ENCODE measurements at regions of chr1 and their contacts with region 1.

Region 1: GRCh38 chr1:35930593-35931445 is at the start of gene AGO3:
- DNase-seq: peak; percentile 73 to 96 (median 80)
- ATAC-seq: peak; percentile 79
- H3K4me3 ChIP-seq: peak within 1 kb of the TSS; percentile 78
- H3K4me3 Mint-ChIP-seq: peak within 1 kb of the TSS; percentile 94
- H3K27ac ChIP-seq: peak within 1 kb of the TSS; percentile 91 to 97
- H3K27ac Mint-ChIP-seq: peak within 1 kb of the TSS; percentile 96
- H3K4me1 ChIP-seq: peaks cover 19% of the 10 kb centered on the region
- H3K4me1 Mint-ChIP-seq: peaks cover 44% of the 10 kb centered on the region
- H3K27me3 ChIP-seq: no peaks in the 10 kb centered on the region
- H3K27me3 Mint-ChIP-seq: no peaks in the 10 kb centered on the region
- CTCF ChIP-seq: no peak
- total RNA-seq, gene AGO3: 31.3 to 34.5 TPM

Region 2: GRCh38 chr1:35825255-35825654 is 105.6 kb before region 1 on chr1:
- CTCF ChIA-PET with region 1: no interaction called
- POLR2A ChIA-PET with region 1: no interaction called
- intact Hi-C with region 1: no loop called
- DNase-seq: no peak
- ATAC-seq: no peak
- H3K4me3 ChIP-seq: no peak overlapping the region
- H3K4me3 Mint-ChIP-seq: no peak overlapping the region
- H3K27ac ChIP-seq: no peak overlapping the region
- H3K27ac Mint-ChIP-seq: no peak overlapping the region
- H3K4me1 ChIP-seq: no peaks in the 10 kb centered on the region
- H3K4me1 Mint-ChIP-seq: no peaks in the 10 kb centered on the region
- H3K27me3 ChIP-seq: no peaks in the 10 kb centered on the region
- H3K27me3 Mint-ChIP-seq: no peaks in the 10 kb centered on the region
- CTCF ChIP-seq: no peak

Region 3: GRCh38 chr1:35851132-35851869 is 79.5 kb before region 1 on chr1:
- CTCF ChIA-PET with region 1: no interaction called
- POLR2A ChIA-PET with region 1: no interaction called
- intact Hi-C with region 1: no loop called
- DNase-seq: no peak
- ATAC-seq: no peak
- H3K4me3 ChIP-seq: no peak overlapping the region
- H3K4me3 Mint-ChIP-seq: no peak overlapping the region
- H3K27ac ChIP-seq: no peak overlapping the region
- H3K27ac Mint-ChIP-seq: no peak overlapping the region
- H3K4me1 ChIP-seq: no peaks in the 10 kb centered on the region
- H3K4me1 Mint-ChIP-seq: no peaks in the 10 kb centered on the region
- H3K27me3 ChIP-seq: no peaks in the 10 kb centered on the region
- H3K27me3 Mint-ChIP-seq: no peaks in the 10 kb centered on the region
- CTCF ChIP-seq: no peak

Region 4: DNA sequence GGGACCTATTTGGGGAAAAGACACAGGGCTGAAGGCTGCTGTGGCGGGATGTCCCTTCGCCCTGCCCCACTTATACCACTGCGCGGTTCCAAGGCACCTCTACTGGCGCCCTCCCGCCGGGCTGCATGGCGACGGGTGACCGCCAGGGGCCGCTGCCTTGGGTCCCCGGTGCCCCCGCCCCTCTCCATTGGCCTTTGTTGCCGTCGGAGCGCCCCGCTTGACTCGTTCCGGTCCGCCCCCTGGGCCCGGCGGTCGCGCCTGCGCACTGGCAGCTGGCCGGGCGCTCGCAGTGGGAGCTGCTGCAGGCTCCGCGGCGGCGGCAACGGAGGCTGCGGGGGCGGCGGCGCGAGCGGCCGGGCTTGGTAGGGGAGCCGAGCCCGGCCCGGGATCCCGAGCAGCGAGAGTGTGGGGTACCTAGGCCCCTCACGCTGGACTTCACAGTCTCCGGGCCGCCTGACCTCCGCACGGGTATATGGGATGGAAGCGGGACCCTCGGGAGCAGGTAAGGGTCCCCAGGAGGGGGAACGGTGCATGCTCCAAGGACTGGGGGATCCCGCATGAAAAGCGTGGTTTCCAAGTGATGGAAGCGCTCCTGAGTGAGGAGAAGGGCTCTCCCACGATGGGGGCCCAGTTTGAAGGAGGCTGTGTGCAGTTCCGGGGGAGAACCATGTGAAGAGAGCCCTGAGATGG is 47.7 kb before region 1 on chr1 and contains the start of gene AGO1:
- CTCF ChIA-PET with region 1: interaction called, 7 read pairs
- POLR2A ChIA-PET with region 1: interaction called, 23 read pairs
- intact Hi-C with region 1: loop called (anchors 1 kb)
- DNase-seq: peak; percentile 94 to 98 (median 97)
- ATAC-seq: peak; percentile 98
- H3K4me3 ChIP-seq: peak within 1 kb of the TSS; percentile 100
- H3K4me3 Mint-ChIP-seq: peak within 1 kb of the TSS; percentile 95
- H3K27ac ChIP-seq: peak within 1 kb of the TSS; percentile 41 to 55
- H3K27ac Mint-ChIP-seq: peak within 1 kb of the TSS; percentile 69
- H3K4me1 ChIP-seq: peaks cover 39% of the 10 kb centered on the region
- H3K4me1 Mint-ChIP-seq: peaks cover 57% of the 10 kb centered on the region
- H3K27me3 ChIP-seq: no peaks in the 10 kb centered on the region
- H3K27me3 Mint-ChIP-seq: no peaks in the 10 kb centered on the region
- CTCF ChIP-seq: peak; percentile 90
- total RNA-seq, gene AGO1: 15.2 to 16.3 TPM

Region 5: GRCh38 chr1:35945327-35945726 is 14.5 kb after region 1 on chr1:
- CTCF ChIA-PET with region 1: interaction called, 3 read pairs
- POLR2A ChIA-PET with region 1: interaction called, 19 read pairs
- intact Hi-C with region 1: no loop called
- DNase-seq: no peak
- ATAC-seq: no peak
- H3K4me3 ChIP-seq: no peak overlapping the region
- H3K4me3 Mint-ChIP-seq: no peak overlapping the region
- H3K27ac ChIP-seq: no peak overlapping the region
- H3K27ac Mint-ChIP-seq: no peak overlapping the region
- H3K4me1 ChIP-seq: peaks cover 6% of the 10 kb centered on the region
- H3K4me1 Mint-ChIP-seq: peaks cover 53% of the 10 kb centered on the region
- H3K27me3 ChIP-seq: no peaks in the 10 kb centered on the region
- H3K27me3 Mint-ChIP-seq: no peaks in the 10 kb centered on the region
- CTCF ChIP-seq: no peak

Region 6: DNA sequence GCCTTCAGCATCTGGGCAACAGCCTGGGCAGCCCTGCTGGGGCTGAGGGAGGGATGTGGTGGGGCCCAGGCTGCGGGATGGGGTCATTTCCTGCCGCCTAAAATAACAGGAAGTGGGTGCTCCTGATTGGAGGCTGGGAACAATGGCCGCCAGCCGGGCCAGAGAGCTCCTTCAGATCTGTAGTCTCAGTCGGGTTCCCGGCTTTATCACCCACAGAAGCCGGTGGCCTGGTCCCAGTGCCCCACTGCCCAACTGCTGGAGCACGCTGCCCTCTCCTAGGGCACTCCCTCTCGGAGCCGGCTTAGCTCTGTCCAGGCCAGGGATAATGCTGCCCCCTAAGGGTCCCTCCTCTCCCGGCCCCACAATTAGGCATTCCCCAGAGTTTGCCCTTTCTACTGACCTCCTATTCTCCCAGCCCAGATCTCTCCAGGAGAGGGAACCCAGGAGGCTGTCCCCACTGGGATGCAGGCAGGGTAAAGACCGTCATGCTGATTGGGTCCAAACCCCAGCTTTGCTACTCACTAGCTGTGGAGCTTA is 230.2 kb after region 1 on chr1:
- CTCF ChIA-PET with region 1: no interaction called
- POLR2A ChIA-PET with region 1: interaction called, 15 read pairs
- intact Hi-C with region 1: no loop called
- DNase-seq: peak; percentile 41 to 85 (median 64)
- ATAC-seq: peak; percentile 25
- H3K4me3 ChIP-seq: peak overlapping the region; percentile 61
- H3K4me3 Mint-ChIP-seq: peak overlapping the region; percentile 88
- H3K27ac ChIP-seq: peak overlapping the region; percentile 91 to 93
- H3K27ac Mint-ChIP-seq: peak overlapping the region; percentile 97
- H3K4me1 ChIP-seq: peaks cover 79% of the 10 kb centered on the region
- H3K4me1 Mint-ChIP-seq: peaks cover 72% of the 10 kb centered on the region
- H3K27me3 ChIP-seq: no peaks in the 10 kb centered on the region
- H3K27me3 Mint-ChIP-seq: no peaks in the 10 kb centered on the region
- CTCF ChIP-seq: no peak

Measured in CD4-positive, alpha-beta T cell (primary cell).